Activated CD4-positive, alpha-beta T cell treated with anti-CD3 and anti-CD28 coated beads for 36 hours (primary cell): ENCODE measurements at regions of chr1 and their contacts with region 1.

Region 1: GRCh38 chr1:190588424-190588823 is 110.8 kb upstream of the BRINP3 start:
- DNase-seq: no peak
- ATAC-seq: no peak
- H3K4me3 Mint-ChIP-seq: no peak overlapping the region
- H3K27ac Mint-ChIP-seq: no peak overlapping the region
- H3K4me1 Mint-ChIP-seq: no peaks in the 10 kb centered on the region
- H3K27me3 Mint-ChIP-seq: no peaks in the 10 kb centered on the region

Region 2: DNA sequence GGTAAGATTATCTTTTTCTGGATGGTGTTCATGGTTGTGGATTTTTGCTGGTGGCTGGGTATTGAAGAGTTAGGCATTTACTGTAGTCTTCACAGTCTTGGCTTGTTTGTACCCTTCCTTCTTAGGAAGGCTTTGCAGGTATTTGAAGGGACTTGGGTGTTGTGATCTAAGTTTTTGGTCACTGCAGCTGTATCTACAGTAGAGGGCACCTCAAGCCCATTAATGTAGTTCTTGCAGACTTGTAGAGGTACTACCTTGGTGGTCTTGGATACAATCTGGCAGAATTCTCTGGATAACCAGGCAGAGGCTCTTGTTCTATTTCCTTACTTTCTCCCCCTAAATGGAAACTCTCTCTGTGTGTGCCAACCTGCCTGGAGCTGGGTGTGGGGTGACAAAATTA is 45.1 kb after region 1 on chr1:
- CTCF ChIA-PET with region 1: no interaction called
- POLR2A ChIA-PET with region 1: no interaction called
- intact Hi-C with region 1: loop called in 1 of 2 experiments (anchors 5 kb)
- DNase-seq: no peak
- ATAC-seq: no peak
- H3K4me3 Mint-ChIP-seq: no peak overlapping the region
- H3K27ac Mint-ChIP-seq: no peak overlapping the region
- H3K4me1 Mint-ChIP-seq: no peaks in the 10 kb centered on the region
- H3K27me3 Mint-ChIP-seq: no peaks in the 10 kb centered on the region